ENCODE measurements at regions of chr17 and their contacts with region 1.

Region 1: GRCh38 chr17:8057691-8058114 is 18.8 kb downstream of the ALOX15B start:
- DNase-seq: peak in 11 of 14 experiments; percentile 19 to 83 (median 35)
- ATAC-seq: peak; percentile 96
- H3K4me3 ChIP-seq: no peak overlapping the region
- H3K4me3 Mint-ChIP-seq: no peak overlapping the region
- H3K27ac ChIP-seq: no peak overlapping the region
- H3K27ac Mint-ChIP-seq: no peak overlapping the region
- H3K4me1 ChIP-seq: peaks cover 15% of the 10 kb centered on the region
- H3K4me1 Mint-ChIP-seq: no peaks in the 10 kb centered on the region
- H3K27me3 ChIP-seq: peaks cover 5 to 38% of the 10 kb centered on the region in 2 experiments
- H3K27me3 Mint-ChIP-seq: peaks cover 58% of the 10 kb centered on the region
- CTCF ChIP-seq: peak; percentile 71

Region 2: DNA sequence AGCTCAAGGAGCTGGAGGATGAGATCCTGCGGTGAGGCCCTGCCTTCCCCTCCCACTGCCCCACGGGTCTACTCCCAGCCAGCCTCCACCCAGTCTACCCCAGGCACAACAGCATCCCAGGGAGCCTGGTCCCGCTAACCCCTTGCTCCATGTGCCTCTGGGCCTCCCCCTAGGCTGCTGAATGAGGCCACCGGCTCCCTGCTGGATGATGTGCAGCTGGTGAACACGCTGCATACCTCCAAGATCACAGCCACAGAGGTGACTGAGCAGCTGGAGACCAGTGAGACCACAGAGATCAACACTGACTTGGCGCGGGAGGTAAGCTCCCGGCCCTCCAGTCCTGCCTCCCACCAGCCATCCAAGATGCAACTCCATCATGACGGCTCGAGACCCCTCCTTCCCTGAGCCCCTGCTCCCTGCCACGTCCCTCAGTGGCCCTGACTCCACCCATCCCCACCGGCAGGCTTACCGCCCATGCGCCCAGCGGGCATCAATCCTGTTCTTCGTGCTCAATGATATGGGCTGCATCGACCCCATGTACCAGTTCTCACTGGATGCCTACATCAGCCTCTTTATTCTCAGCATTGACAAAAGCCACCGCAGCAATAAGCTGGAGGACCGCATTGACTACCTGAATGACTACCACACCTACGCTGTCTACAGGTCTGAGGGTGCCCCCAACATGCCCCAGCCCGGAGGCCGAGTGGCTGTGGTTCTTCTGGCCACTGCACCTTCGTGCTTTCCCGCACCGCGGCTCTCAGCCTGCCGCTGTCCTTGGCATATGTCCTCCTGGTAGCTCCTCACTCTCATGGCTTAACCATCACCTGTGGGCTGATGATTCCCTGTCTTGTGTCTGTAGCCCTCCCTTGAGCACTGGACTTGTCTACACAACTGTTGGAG is 238.7 kb before region 1 on chr17:
- CTCF ChIA-PET with region 1: interaction called, 3 read pairs
- POLR2A ChIA-PET with region 1: no interaction called
- intact Hi-C with region 1: loop called (anchors 1 kb)
- DNase-seq: no peak
- ATAC-seq: no peak
- H3K4me3 ChIP-seq: no peak overlapping the region
- H3K4me3 Mint-ChIP-seq: no peak overlapping the region
- H3K27ac ChIP-seq: no peak overlapping the region
- H3K27ac Mint-ChIP-seq: no peak overlapping the region
- H3K4me1 ChIP-seq: no peaks in the 10 kb centered on the region
- H3K4me1 Mint-ChIP-seq: no peaks in the 10 kb centered on the region
- H3K27me3 ChIP-seq: no peaks in the 10 kb centered on the region
- H3K27me3 Mint-ChIP-seq: no peaks in the 10 kb centered on the region
- CTCF ChIP-seq: no peak

Region 3: DNA sequence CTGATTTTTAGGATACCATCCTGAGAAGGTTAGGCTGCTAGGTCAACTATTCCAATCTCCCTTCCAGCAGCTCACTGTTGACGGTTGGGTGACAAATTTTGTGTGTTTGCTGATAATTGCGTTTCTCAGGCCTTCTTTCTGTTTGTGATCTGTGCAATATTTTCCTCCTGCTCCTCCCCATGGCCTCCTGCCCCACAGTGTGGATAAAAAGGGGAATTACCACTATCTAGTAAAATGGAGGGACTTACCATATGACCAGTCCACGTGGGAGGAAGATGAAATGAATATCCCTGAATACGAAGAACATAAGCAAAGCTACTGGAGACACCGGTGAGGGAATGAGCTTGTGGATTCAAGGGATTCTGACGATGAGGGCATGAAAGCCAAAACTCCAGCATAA is 159.9 kb before region 1 on chr17:
- CTCF ChIA-PET with region 1: no interaction called
- POLR2A ChIA-PET with region 1: no interaction called
- intact Hi-C with region 1: no loop called
- DNase-seq: peak in 3 of 14 experiments; percentile 46 to 68 (median 59)
- ATAC-seq: peak; percentile 82
- H3K4me3 ChIP-seq: no peak overlapping the region
- H3K4me3 Mint-ChIP-seq: no peak overlapping the region
- H3K27ac ChIP-seq: no peak overlapping the region
- H3K27ac Mint-ChIP-seq: peak overlapping the region; percentile 7
- H3K4me1 ChIP-seq: peaks cover 3% of the 10 kb centered on the region
- H3K4me1 Mint-ChIP-seq: peaks cover 12% of the 10 kb centered on the region
- H3K27me3 ChIP-seq: no peaks in the 10 kb centered on the region
- H3K27me3 Mint-ChIP-seq: no peaks in the 10 kb centered on the region
- CTCF ChIP-seq: peak; percentile 11

Region 4: GRCh38 chr17:7989781-7990655 is 67.7 kb before region 1 on chr17:
- CTCF ChIA-PET with region 1: interaction called, 3 read pairs
- POLR2A ChIA-PET with region 1: no interaction called
- intact Hi-C with region 1: loop called (anchors 2 to 10 kb)
- DNase-seq: peak; percentile 79 to 98 (median 93)
- ATAC-seq: peak; percentile 91
- H3K4me3 ChIP-seq: peak overlapping the region; percentile 55
- H3K4me3 Mint-ChIP-seq: peak overlapping the region; percentile 82
- H3K27ac ChIP-seq: peak overlapping the region; percentile 24 to 78
- H3K27ac Mint-ChIP-seq: peak overlapping the region; percentile 83
- H3K4me1 ChIP-seq: peaks cover 18% of the 10 kb centered on the region
- H3K4me1 Mint-ChIP-seq: peaks cover 26% of the 10 kb centered on the region
- H3K27me3 ChIP-seq: no peaks in the 10 kb centered on the region
- H3K27me3 Mint-ChIP-seq: peaks cover 4% of the 10 kb centered on the region
- CTCF ChIP-seq: peak; percentile 94

Region 5: DNA sequence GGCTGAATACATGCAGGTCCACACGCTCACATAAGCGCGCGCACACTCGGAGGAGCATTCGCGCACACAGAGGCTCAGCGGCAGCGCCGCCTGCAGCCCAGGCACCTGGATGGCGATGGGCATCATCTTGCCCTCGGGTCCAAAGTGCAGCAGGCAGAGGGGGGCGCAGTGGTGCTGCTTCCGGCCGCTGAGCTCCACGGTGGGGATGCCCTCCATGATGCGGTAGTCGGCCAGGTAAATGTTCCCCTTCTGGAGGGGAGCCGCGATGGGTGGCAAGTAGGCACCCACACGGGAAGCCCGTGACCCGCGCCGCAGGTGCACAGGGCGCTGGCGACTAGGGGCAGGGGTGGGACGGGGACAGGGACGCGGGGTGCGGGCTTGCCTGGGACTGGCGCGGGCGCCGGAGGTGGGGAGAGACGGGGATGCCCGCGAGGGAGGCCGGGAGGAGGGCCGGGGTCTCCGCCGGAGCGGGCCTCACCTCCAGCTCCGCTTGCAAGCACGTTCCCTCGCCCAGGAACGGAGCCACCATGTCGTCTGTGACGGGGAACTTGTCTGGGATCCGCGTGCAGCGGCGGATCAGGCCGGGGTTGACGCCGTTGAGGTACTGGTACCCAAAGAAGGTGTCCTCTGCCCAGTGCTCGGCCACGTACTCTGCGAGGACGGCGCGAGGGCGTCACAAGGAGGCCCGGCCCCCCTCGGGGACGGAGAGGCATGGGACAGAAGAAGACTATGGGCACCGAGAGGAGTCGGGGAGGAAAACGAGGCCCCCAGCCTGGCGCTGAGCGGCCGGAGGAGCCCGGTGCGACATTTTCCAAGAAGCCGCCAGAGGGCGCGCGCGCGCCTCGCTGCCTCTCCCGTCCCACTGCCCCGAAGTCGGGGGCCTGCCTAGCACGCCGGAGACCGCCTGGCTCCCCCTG is 21.8 kb after region 1 on chr17:
- CTCF ChIA-PET with region 1: interaction called, 59 read pairs
- POLR2A ChIA-PET with region 1: interaction called, 4 read pairs
- intact Hi-C with region 1: no loop called
- DNase-seq: peak; percentile 66 to 92 (median 76)
- ATAC-seq: peak; percentile 80
- H3K4me3 ChIP-seq: peak overlapping the region; percentile 77
- H3K4me3 Mint-ChIP-seq: peak overlapping the region; percentile 92
- H3K27ac ChIP-seq: peak overlapping the region; percentile 52 to 70
- H3K27ac Mint-ChIP-seq: peak overlapping the region; percentile 76
- H3K4me1 ChIP-seq: peaks cover 20% of the 10 kb centered on the region
- H3K4me1 Mint-ChIP-seq: peaks cover 17% of the 10 kb centered on the region
- H3K27me3 ChIP-seq: peaks cover 4 to 6% of the 10 kb centered on the region in 2 experiments
- H3K27me3 Mint-ChIP-seq: peaks cover 7% of the 10 kb centered on the region
- CTCF ChIP-seq: peak; percentile 82

Region 6: DNA sequence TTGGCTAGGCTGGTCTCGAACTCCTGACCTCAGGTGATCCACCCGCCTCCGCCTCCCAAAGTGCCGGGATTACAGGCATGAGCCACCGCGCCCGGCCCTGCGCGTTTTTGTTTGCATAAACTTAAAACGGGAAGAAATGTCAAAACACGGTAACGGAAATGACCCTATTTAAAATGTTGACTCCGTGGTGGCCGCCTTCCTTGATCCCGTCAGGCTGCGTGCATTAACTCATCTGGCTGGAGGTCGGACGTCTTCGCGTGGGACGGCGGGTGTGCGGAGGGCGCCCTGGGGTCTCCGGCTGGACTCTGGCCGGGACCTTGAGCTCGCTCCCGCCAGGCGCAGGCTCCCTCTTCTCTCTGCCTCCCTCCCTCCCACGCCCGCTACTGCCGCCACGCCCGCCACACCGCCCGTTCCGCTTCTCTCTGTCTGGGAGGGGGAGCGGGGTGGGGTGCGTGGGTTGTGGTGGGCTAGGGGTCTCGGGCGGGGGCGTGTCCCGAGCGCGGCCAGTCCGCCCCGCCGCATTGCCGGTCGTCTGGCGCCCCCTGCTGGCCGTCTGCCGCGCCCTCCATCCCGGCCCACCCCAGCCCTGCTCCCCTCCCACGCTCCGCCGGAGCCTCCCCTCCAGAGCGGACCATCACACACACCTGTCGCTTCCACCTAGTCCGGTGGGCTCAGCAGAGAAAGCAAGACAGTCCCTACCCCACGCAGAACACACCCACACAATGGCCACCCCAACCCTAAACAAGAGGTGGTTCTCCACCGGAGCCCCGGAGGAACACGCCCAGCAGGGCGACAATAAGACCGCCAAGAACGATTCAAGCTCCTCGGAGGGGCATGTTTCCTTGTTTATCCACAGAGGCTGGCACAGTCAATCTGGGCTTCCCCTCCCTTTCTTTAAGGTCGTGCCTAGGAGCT is 688.1 kb after region 1 on chr17:
- CTCF ChIA-PET with region 1: no interaction called
- POLR2A ChIA-PET with region 1: no interaction called
- intact Hi-C with region 1: loop called (anchors 2 to 5 kb)
- DNase-seq: peak; percentile 64 to 88 (median 76)
- ATAC-seq: peak; percentile 80
- H3K4me3 ChIP-seq: peak overlapping the region; percentile 78
- H3K4me3 Mint-ChIP-seq: peak overlapping the region; percentile 93
- H3K27ac ChIP-seq: peak overlapping the region; percentile 44 to 51
- H3K27ac Mint-ChIP-seq: peak overlapping the region; percentile 83
- H3K4me1 ChIP-seq: peaks cover 23% of the 10 kb centered on the region
- H3K4me1 Mint-ChIP-seq: peaks cover 12% of the 10 kb centered on the region
- H3K27me3 ChIP-seq: no peaks in the 10 kb centered on the region
- H3K27me3 Mint-ChIP-seq: no peaks in the 10 kb centered on the region
- CTCF ChIP-seq: peak; percentile 99